Breast epithelium (tissue), 4 donors: ENCODE measurements at regions of chr2 and their contacts with region 1.

Region 1: GRCh38 chr2:177332041-177332991 is 60.3 kb upstream of the AGPS start:
- DNase-seq: peak in 1 of 2 donors; percentile 44
- H3K4me3 ChIP-seq: no peak overlapping the region
- H3K27ac ChIP-seq: peak overlapping the region in 1 of 2 donors; percentile 50
- H3K4me1 ChIP-seq: no peaks in the 10 kb centered on the region
- H3K27me3 ChIP-seq: no peaks in the 10 kb centered on the region
- CTCF ChIP-seq: peak; percentile 47 to 71 (median 65)
- POLR2A ChIP-seq: no peak

Region 2: DNA sequence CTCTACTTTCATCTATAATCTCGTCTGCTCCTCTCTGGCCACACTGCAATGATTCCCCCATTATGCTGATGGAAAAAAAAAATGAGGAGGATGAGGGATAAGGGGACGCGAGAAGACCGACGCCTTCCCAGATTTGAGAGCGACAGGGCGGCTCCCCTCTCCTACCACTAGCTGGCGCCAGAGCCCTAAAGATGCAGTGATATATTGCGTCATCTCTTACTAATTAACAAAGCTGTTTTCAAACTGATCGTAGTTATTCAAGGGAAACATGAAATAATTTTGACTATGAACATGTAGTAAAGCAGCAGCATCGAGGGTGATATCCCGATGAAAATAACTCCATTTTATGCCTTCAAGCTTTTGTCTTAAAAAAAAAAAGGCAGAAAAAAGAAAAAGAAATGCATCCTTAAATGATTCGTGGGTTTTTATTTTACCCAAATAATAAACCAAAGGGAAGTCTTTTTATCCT is 167.7 kb before region 1 on chr2:
- intact Hi-C with region 1: loop called (anchors 5 kb)
- DNase-seq: peak; percentile 77 to 80
- H3K4me3 ChIP-seq: peak overlapping the region; percentile 40 to 55 (median 42)
- H3K27ac ChIP-seq: peak overlapping the region; percentile 79 to 86
- H3K4me1 ChIP-seq: no peaks in the 10 kb centered on the region
- H3K27me3 ChIP-seq: no peaks in the 10 kb centered on the region
- CTCF ChIP-seq: peak; percentile 99
- POLR2A ChIP-seq: no peak